A673 (cell line): ENCODE measurements at regions of chr18 and their contacts with region 1.

Region 1: GRCh38 chr18:64330161-64330560 is 181.3 kb upstream of the LINC00305 start:
- DNase-seq: peak; percentile 77
- H3K4me3 ChIP-seq: no peak overlapping the region
- H3K27ac ChIP-seq: no peak overlapping the region
- H3K4me1 ChIP-seq: peaks cover 47% of the 10 kb centered on the region
- H3K27me3 ChIP-seq: no peaks in the 10 kb centered on the region
- CTCF ChIP-seq: peak; percentile 67

Region 2: GRCh38 chr18:64037812-64038414 is 292.2 kb before region 1 on chr18:
- CTCF ChIA-PET with region 1: interaction called, 3 read pairs
- POLR2A ChIA-PET with region 1: no interaction called
- intact Hi-C with region 1: loop called (anchors 1 kb)
- DNase-seq: peak; percentile 62
- H3K4me3 ChIP-seq: no peak overlapping the region
- H3K27ac ChIP-seq: no peak overlapping the region
- H3K4me1 ChIP-seq: no peaks in the 10 kb centered on the region
- H3K27me3 ChIP-seq: no peaks in the 10 kb centered on the region
- CTCF ChIP-seq: peak; percentile 71

Region 3: DNA sequence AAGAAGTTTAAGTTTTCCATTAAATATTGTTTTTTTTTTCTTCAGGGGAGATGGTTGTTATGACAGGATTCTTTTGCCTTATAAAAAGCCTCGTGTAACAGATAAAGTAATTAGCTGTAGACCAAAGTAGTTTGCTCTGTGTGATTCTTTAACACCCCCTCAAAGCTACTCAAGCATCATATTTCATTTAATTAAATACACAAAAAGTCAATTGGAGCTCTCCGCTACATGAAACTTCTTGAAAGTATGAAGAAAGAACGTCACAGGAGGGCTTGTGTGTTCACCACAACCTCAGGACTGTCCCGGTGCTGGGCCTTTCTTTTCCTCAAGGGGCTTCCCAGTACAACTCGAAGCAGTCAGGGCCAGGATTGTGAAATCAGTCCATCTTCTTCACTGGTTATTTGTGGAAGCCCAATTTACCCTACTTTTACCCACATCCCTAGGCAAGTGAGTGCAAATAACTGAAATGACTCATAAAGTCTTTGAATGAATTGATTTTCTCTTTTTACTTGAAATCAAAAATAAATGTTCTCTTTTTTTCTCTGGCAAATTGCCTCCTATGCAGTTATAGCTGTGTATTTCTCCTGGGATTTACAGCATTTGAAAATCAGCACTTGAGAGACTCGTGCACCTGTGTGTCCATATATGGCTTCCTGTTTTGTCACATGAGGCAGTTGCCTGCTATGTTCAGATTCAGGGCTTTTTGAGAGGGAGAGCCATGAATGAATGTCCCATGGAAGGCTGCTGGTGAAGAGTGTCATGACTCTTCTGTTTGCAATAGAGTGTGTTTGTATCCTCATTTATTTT is 229.8 kb before region 1 on chr18:
- CTCF ChIA-PET with region 1: interaction called, 4 read pairs
- POLR2A ChIA-PET with region 1: no interaction called
- intact Hi-C with region 1: loop called (anchors 2 kb)
- DNase-seq: peak; percentile 36
- H3K4me3 ChIP-seq: no peak overlapping the region
- H3K27ac ChIP-seq: no peak overlapping the region
- H3K4me1 ChIP-seq: peaks cover 6% of the 10 kb centered on the region
- H3K27me3 ChIP-seq: no peaks in the 10 kb centered on the region
- CTCF ChIP-seq: no peak

Region 4: GRCh38 chr18:64119916-64120315 is 210.2 kb before region 1 on chr18:
- CTCF ChIA-PET with region 1: interaction called, 5 read pairs
- POLR2A ChIA-PET with region 1: no interaction called
- intact Hi-C with region 1: loop called (anchors 5 kb)
- DNase-seq: peak; percentile 16
- H3K4me3 ChIP-seq: no peak overlapping the region
- H3K27ac ChIP-seq: no peak overlapping the region
- H3K4me1 ChIP-seq: peaks cover 6% of the 10 kb centered on the region
- H3K27me3 ChIP-seq: no peaks in the 10 kb centered on the region
- CTCF ChIP-seq: peak; percentile 38; the same call in 1 of the 2 replicates

Region 5: GRCh38 chr18:64244571-64244970 is 85.6 kb before region 1 on chr18:
- CTCF ChIA-PET with region 1: interaction called, 4 read pairs
- POLR2A ChIA-PET with region 1: no interaction called
- intact Hi-C with region 1: loop called (anchors 1 kb)
- DNase-seq: peak; percentile 69
- H3K4me3 ChIP-seq: no peak overlapping the region
- H3K27ac ChIP-seq: no peak overlapping the region
- H3K4me1 ChIP-seq: peaks cover 15% of the 10 kb centered on the region
- H3K27me3 ChIP-seq: no peaks in the 10 kb centered on the region
- CTCF ChIP-seq: peak; percentile 71

Region 6: DNA sequence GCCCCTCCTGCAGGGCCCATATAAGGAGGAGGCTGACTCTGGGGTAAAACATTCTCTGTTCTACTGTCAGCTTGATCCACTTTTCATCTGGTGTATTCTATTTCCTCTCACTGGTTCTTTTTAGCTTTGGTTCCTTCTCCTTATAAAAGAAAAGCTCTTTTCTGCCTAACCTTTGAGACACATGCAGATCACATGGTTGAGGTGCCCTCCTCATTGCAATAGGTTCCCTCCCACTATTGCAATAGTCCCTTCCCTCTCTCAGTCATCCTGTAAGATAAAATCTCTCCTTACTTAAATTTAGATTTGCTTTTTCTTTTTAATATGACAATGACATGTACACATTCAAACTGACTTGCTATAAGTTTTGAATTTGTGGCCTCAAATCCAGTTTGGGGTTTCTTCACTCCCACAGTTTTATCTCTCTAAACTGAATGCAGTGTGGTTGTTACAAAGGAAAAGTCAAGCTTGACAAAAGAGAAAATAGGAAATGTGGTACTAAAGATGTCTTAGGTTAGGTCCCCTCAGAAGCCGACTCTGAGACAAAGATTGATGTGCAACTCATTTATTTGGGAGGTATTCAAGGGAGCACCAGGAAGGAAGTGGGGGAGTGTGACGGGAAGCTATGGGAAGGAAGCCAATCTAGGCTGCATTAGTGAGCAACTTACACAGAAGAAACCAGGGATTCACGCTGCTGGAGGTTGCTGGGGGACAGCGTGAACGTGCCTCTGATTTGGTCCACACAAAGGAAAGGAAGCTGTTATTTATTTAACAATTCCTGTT is 53.7 kb before region 1 on chr18:
- CTCF ChIA-PET with region 1: interaction called, 3 read pairs
- POLR2A ChIA-PET with region 1: no interaction called
- intact Hi-C with region 1: loop called (anchors 2 kb)
- DNase-seq: peak; percentile 98
- H3K4me3 ChIP-seq: no peak overlapping the region
- H3K27ac ChIP-seq: peak overlapping the region; percentile 95
- H3K4me1 ChIP-seq: peaks cover 22% of the 10 kb centered on the region
- H3K27me3 ChIP-seq: no peaks in the 10 kb centered on the region
- CTCF ChIP-seq: no peak